ENCODE measurements at regions of chr19 and their contacts with region 1.

Region 1: DNA sequence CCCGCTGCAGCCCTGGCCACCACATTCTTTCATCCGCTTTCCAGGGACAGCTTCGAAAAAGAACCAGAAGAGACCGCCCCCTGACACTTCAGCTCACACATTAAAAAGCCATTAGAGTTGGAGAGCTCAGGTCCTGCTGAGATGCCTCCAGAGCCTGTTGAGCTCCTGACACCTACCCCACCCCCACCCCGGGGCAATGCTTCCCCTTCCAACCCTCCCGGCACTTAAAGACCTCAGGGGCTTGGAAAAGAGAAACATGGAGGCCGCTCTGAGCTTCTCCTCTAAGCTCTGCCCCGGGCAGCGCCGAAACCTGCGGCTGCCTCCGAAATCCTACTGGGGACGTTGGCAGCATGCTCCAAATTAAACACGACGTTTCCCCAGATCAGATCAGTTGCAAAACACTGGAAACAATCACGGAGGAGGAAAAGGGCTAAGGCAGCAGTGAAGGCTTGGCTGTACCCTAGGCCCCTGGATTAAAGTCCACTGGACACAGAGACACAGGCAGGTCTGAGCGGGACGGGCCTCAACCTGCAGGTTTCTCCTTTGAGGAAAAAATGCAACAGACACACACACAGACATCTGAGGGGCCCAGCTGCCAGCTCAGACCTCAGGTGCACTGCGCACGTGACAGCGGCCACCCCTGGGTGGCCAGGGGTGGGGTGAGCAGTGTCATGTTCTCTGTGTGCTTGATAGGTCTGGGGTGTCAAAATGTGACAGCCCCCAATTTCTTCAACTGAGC is 9.6 kb downstream of the SH3GL1 start:
- DNase-seq: no peak
- H3K4me3 ChIP-seq: peak overlapping the region in 2 of 7 experiments; percentile 19 to 23
- H3K27ac ChIP-seq: peak overlapping the region in 1 of 2 experiments; percentile 63
- H3K4me1 ChIP-seq: peaks cover 0 to 39% (median 23%) of the 10 kb centered on the region in 4 experiments
- H3K27me3 ChIP-seq: no peaks in the 10 kb centered on the region

Region 2: DNA sequence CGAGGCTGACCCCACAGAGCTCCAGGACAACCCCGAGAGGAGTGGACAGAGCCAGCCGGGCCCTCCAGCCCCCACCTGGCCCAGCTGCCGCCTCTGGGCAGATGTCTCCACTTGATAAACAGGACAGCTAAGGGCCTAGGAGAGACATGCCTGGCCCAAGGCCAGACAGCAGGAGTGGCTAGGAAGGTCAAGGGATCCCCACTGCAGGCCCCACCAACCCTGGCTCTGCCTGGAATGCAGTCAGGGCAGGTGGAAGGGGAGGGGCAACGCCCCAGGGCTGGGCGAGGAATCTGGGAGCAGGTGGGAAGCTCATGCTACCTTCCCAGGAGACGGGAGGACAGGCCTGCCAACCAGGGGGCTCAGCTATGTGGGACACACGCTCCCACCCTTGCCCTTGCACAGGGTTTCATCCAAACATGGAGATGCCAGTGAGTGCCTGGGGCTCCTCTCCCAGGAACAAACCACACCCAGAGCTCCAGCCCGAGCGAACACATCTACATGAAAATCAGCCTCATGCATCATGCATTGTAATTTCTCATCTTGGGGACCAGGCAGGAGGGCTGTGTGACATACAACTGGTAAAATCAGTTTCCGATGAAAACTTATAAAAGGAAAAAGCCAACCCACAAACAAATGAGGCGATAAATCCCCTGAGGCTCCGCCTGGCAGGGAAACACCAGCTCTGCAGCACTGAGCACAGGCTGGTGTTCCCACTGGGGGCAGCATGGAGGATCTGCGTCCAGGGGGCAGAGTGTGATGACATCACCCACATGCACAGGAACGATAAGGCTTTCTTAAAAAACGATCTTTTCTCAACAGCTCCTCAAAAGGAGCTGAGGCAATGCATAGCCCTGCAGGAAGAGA is 15.3 kb before region 1 on chr19:
- CTCF ChIA-PET with region 1: interaction called, 22 read pairs
- POLR2A ChIA-PET with region 1: interaction called, 6 read pairs
- DNase-seq: peak; percentile 75 to 89 (median 87)
- H3K4me3 ChIP-seq: no peak overlapping the region
- H3K27ac ChIP-seq: peak overlapping the region in 1 of 2 experiments; percentile 73
- H3K4me1 ChIP-seq: peaks cover 0 to 72% (median 49%) of the 10 kb centered on the region in 4 experiments
- H3K27me3 ChIP-seq: no peaks in the 10 kb centered on the region

Measured in common myeloid progenitor, CD34-positive (primary cell).